PC-9 (cell line): ENCODE measurements at regions of chr7 and their contacts with region 1.

Region 1: GRCh38 chr7:149028346-149029109 is at the start of gene PDIA4:
- DNase-seq: peak; percentile 98 to 100
- H3K4me3 ChIP-seq: peak within 1 kb of the TSS; percentile 73
- H3K27ac ChIP-seq: peak within 1 kb of the TSS; percentile 78
- H3K4me1 ChIP-seq: peaks cover 24% of the 10 kb centered on the region
- H3K27me3 ChIP-seq: no peaks in the 10 kb centered on the region
- CTCF ChIP-seq: peak; percentile 17; the same call in 1 of the 2 replicates
- total RNA-seq, gene PDIA4: 200 and 221 TPM in 2 replicates

Region 2: DNA sequence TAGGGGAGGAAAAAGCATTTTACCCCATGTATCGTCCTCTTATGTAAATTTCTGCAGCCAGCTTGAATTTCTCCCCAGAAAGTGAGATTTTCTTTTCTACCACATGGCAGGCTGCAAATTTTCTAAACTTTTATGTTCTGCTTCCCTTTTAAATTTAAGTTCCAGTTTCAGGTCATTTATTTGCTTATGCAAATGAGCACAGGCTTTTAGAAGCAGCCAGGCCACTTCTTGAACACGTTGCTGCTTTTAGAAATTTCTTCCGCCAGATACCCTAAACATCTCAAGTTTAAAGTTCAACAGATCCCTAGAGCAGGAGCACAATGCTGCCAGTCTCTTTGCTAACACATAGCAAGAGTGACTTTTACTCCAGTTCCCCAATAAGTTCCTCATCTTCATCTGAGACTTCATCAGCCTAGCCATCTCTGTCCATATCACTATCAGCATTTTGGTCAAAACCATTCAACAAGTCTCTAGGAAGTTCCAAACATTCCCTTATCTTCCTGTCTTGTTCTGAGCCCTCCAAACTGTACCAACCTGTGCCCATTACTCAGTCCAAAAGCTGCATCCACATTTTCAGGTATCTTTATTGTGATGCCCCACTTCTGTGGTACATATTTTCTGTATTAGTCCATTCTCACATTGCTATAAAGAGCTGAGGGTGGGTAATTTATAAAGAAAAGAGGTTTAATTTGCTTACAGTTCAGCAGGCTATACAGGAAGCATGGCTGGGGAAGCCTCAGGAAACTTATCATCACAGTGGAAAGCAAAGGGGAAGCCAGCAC is 160.7 kb before region 1 on chr7:
- CTCF ChIA-PET with region 1: no interaction called
- POLR2A ChIA-PET with region 1: interaction called, 22 read pairs
- intact Hi-C with region 1: no loop called
- DNase-seq: no peak
- H3K4me3 ChIP-seq: no peak overlapping the region
- H3K27ac ChIP-seq: no peak overlapping the region
- H3K4me1 ChIP-seq: peaks cover 12% of the 10 kb centered on the region
- H3K27me3 ChIP-seq: no peaks in the 10 kb centered on the region
- CTCF ChIP-seq: no peak

Region 3: GRCh38 chr7:149011491-149011890 is 17.0 kb before region 1 on chr7:
- CTCF ChIA-PET with region 1: interaction called, 14 read pairs
- POLR2A ChIA-PET with region 1: no interaction called
- intact Hi-C with region 1: no loop called
- DNase-seq: no peak
- H3K4me3 ChIP-seq: no peak overlapping the region
- H3K27ac ChIP-seq: no peak overlapping the region
- H3K4me1 ChIP-seq: no peaks in the 10 kb centered on the region
- H3K27me3 ChIP-seq: no peaks in the 10 kb centered on the region
- CTCF ChIP-seq: no peak

Region 4: DNA sequence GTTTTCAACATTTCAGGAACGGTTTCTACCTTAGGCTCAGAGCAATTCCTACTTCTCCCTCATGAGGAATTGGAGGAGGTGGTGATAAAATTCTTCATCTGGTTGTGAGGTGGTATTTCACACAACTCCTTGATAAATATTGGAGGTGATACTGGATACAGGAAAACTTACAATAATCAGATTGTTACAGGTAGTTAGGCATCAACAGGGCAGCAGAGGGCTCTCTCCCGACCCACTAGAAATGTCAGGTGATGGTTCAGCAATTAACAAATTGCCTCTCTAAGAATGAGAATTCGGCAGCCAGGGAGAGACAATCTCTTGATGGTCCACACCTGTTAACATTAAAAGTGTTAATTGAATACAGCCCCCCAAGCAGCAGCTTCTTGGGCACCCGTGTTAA is 39.3 kb after region 1 on chr7:
- CTCF ChIA-PET with region 1: interaction called, 6 read pairs
- POLR2A ChIA-PET with region 1: no interaction called
- intact Hi-C with region 1: loop called (anchors 1 kb)
- DNase-seq: no peak
- H3K4me3 ChIP-seq: no peak overlapping the region
- H3K27ac ChIP-seq: no peak overlapping the region
- H3K4me1 ChIP-seq: peaks cover 4% of the 10 kb centered on the region; the same call in 1 of the 2 replicates
- H3K27me3 ChIP-seq: no peaks in the 10 kb centered on the region
- CTCF ChIP-seq: peak; percentile 47; the same call in 1 of the 2 replicates

Region 5: GRCh38 chr7:149195180-149196150 is 166.9 kb after region 1 on chr7 and contains the start of gene ZNF282:
- CTCF ChIA-PET with region 1: no interaction called
- POLR2A ChIA-PET with region 1: no interaction called
- intact Hi-C with region 1: no loop called
- DNase-seq: peak; percentile 90 to 94
- H3K4me3 ChIP-seq: peak within 1 kb of the TSS; percentile 91
- H3K27ac ChIP-seq: peak within 1 kb of the TSS; percentile 75
- H3K4me1 ChIP-seq: peaks cover 17% of the 10 kb centered on the region
- H3K27me3 ChIP-seq: no peaks in the 10 kb centered on the region
- CTCF ChIP-seq: peak; percentile 69
- total RNA-seq, gene ZNF282: 32.5 and 35.9 TPM in 2 replicates

Region 6: DNA sequence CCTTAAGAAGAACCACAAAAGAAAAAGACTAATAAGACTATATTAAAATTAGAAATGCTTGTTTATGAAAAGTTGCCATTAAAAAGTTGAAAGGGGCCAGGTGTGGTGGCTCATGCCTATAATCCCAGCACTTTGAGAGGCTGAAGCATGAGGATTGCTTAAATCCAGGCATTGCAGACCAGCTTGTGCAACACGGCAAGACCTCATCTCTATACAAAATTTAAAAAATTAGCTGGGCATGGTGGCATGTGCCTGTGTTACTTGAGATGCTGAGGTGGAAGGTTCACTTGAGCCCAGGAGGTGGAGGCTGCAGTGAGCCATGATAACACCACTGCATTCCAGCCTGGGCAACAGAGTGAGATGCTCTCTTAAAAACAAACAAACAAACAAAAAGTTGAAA is 363.9 kb after region 1 on chr7:
- CTCF ChIA-PET with region 1: no interaction called
- POLR2A ChIA-PET with region 1: no interaction called
- intact Hi-C with region 1: no loop called
- DNase-seq: no peak
- H3K4me3 ChIP-seq: no peak overlapping the region
- H3K27ac ChIP-seq: no peak overlapping the region
- H3K4me1 ChIP-seq: peaks cover 19% of the 10 kb centered on the region
- H3K27me3 ChIP-seq: no peaks in the 10 kb centered on the region
- CTCF ChIP-seq: no peak